MCF 10A (cell line): ENCODE measurements at regions of chr2 and their contacts with region 1.

Region 1: GRCh38 chr2:88919087-88919738 is 227.7 kb downstream of the RPIA start:
- DNase-seq: peak; percentile 46
- H3K4me3 Mint-ChIP-seq: no peak overlapping the region
- H3K27ac Mint-ChIP-seq: peak overlapping the region; percentile 35
- H3K4me1 Mint-ChIP-seq: no peaks in the 10 kb centered on the region
- H3K27me3 Mint-ChIP-seq: peaks cover 64% of the 10 kb centered on the region
- CTCF ChIP-seq: peak; percentile 48

Region 2: DNA sequence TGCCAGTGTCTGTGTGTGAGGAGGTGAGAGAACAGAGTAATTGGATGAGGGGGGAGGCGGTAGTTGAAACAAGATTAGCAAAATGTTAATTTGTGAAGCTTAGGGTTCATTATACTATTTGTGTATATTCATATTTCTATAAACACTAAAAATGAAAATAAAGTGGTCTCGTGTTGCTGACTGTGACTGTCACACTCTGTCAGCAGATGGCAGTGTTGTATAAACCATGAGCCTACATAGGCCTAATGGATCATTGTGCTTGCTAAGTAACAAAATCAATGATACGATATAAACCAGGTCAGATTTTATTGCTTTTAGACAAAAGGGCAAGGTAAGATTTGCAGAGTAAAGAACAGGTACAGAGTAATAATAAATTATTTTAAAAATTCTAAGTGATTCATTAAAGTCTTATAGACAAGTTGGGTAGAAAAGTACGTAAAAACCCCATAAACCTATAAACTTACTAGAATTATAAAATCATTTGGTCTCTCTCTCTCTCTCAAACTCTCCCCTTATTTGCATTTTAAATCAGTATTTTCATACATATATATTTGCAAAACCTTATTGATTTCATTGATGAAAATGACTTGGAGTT is 45.1 kb before region 1 on chr2:
- CTCF ChIA-PET with region 1: interaction called, 10 read pairs
- POLR2A ChIA-PET with region 1: no interaction called
- intact Hi-C with region 1: loop called (anchors 5 kb)
- DNase-seq: peak; percentile 73
- H3K4me3 Mint-ChIP-seq: no peak overlapping the region
- H3K27ac Mint-ChIP-seq: no peak overlapping the region
- H3K4me1 Mint-ChIP-seq: no peaks in the 10 kb centered on the region
- H3K27me3 Mint-ChIP-seq: peaks cover 86% of the 10 kb centered on the region
- CTCF ChIP-seq: peak; percentile 77

Region 3: DNA sequence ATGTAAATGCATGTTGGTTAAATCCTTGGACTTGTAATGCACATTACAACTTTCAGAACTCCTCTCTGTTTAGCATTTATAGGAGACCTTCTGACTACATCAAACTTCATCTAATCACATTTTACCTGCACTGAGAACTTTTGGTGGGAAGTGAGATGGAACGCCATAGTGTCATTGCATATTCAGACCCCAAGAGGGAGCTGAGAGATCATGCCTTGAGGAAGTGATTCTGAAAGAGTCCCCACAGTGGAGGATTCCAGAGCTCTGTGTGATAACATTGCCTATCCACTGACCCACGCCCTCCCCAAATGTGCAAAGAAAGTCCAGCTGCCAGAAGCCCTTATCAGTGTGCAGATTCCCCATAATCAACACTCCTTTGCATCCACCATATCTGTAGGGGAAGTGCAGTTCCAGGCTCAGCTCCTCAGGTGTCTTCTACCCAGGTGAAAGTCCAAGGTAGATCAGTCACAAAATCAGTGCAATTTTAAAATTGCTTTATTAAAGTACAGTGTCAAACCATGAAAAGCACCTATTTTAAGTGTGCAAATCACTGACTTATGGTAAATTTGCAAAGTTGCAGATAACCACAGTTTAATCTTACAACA is 15.4 kb before region 1 on chr2:
- CTCF ChIA-PET with region 1: interaction called, 10 read pairs
- POLR2A ChIA-PET with region 1: no interaction called
- intact Hi-C with region 1: no loop called
- DNase-seq: peak; percentile 51
- H3K4me3 Mint-ChIP-seq: no peak overlapping the region
- H3K27ac Mint-ChIP-seq: no peak overlapping the region
- H3K4me1 Mint-ChIP-seq: no peaks in the 10 kb centered on the region
- H3K27me3 Mint-ChIP-seq: peaks cover 91% of the 10 kb centered on the region
- CTCF ChIP-seq: peak; percentile 71